Mammary epithelial cell (primary cell): ENCODE measurements at regions of chr11 and their contacts with region 1.

Region 1: GRCh38 chr11:3735827-3736226 is 61.5 kb downstream of the NUP98 start:
- DNase-seq: peak; percentile 31
- H3K4me3 ChIP-seq: no peak overlapping the region
- H3K27ac ChIP-seq: no peak overlapping the region
- H3K4me1 ChIP-seq: no peaks in the 10 kb centered on the region
- H3K27me3 ChIP-seq: no peaks in the 10 kb centered on the region
- CTCF ChIP-seq: no peak

Region 2: GRCh38 chr11:3723014-3723708 is 12.7 kb before region 1 on chr11:
- CTCF ChIA-PET with region 1: no interaction called
- dilution Hi-C with region 1: no loop called
- in situ Hi-C with region 1: no loop called
- intact Hi-C with region 1: loop called (anchors 2 kb)
- DNase-seq: peak; percentile 80
- H3K4me3 ChIP-seq: no peak overlapping the region
- H3K27ac ChIP-seq: peak overlapping the region; percentile 44
- H3K4me1 ChIP-seq: peaks cover 8% of the 10 kb centered on the region
- H3K27me3 ChIP-seq: no peaks in the 10 kb centered on the region
- CTCF ChIP-seq: no peak